ENCODE measurements at regions of chr17 and their contacts with region 1.

Region 1: DNA sequence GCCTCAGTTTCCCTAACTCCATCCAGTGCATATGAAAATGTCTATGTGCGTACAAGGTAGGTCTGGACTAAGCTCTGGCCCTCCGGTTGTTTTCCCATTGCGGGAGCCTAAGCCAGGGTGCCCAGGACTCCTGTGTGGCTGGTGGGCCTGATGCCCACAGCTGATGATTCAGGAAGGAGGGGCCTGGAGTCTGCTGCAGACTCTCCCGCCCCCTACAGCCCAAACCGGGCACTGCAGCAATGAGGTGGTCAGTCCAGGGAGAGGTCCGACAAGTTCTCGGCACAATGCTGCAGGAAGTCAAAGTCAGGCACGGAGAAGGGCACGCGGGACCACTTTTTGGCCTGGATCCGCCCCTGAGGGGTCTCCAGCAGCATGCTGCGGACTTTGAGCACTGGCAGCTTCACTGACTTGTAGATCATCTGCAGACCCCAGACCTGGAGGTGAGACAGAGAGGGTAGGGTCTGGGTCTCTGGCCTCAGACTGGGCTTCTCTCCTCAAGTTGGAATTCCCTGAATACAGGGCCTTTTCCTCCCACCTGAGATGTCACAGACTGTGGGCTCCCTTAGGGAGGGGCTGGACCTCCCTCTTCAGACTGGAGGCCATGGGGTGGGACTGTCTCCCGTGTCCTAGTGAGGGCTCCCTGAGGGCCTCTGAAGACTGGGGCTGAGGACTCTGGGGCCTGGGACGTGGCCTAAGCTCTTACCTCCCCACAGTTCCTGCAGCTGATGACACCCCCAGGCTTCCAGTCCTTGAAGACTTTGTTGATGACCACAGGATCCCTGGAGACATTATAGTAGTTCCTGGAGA is 3.4 kb upstream of the ZNF385C start:
- DNase-seq: peak; percentile 94
- H3K4me3 Mint-ChIP-seq: no peak overlapping the region
- H3K27ac Mint-ChIP-seq: no peak overlapping the region
- H3K4me1 Mint-ChIP-seq: peaks cover 7% of the 10 kb centered on the region
- H3K27me3 Mint-ChIP-seq: peaks cover 28% of the 10 kb centered on the region
- CTCF ChIP-seq: peak; percentile 98

Region 2: DNA sequence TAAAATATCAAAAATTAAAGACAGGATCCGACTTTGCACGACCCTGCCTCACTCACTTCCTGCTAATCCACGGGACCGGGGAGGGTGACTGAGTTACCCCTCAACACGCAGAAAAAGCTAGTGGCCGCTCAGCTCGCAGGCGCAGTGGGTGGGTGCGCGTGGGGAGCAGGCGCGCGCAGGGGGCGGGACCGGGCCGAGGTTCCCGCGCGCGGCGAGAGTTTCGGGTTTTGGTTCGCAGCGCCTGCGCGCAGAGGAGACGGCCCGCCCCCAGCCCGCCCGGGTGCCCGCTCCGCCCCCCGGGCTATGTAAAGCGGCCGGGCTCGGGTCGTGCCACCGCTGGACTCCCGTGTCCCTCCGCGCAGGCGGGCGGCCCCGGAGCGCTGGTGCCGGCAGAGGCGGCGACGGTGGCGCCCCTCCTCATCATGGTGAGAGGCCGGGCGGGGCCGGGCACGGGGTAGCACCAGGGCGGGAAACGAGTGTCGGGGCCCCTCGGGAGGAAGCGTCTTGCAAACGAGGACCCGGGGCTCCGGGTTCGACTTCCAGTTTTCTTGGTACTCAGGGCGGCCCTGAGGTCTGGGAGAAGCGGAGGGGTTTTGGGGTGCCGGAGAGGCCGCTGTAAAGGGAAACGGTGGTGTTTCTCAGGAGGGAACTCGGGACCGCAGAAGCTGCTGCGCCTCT is 135.1 kb before region 1 on chr17 and contains the start of gene CNP:
- CTCF ChIA-PET with region 1: interaction called, 4 read pairs
- intact Hi-C with region 1: loop called (anchors 5 kb)
- DNase-seq: peak; percentile 98
- H3K4me3 Mint-ChIP-seq: peak within 1 kb of the TSS; percentile 58
- H3K27ac Mint-ChIP-seq: peak within 1 kb of the TSS; percentile 48
- H3K4me1 Mint-ChIP-seq: peaks cover 16% of the 10 kb centered on the region
- H3K27me3 Mint-ChIP-seq: peaks cover 11% of the 10 kb centered on the region
- CTCF ChIP-seq: no peak
- total RNA-seq, gene CNP: 144 and 156 TPM in 2 replicates

Region 3: DNA sequence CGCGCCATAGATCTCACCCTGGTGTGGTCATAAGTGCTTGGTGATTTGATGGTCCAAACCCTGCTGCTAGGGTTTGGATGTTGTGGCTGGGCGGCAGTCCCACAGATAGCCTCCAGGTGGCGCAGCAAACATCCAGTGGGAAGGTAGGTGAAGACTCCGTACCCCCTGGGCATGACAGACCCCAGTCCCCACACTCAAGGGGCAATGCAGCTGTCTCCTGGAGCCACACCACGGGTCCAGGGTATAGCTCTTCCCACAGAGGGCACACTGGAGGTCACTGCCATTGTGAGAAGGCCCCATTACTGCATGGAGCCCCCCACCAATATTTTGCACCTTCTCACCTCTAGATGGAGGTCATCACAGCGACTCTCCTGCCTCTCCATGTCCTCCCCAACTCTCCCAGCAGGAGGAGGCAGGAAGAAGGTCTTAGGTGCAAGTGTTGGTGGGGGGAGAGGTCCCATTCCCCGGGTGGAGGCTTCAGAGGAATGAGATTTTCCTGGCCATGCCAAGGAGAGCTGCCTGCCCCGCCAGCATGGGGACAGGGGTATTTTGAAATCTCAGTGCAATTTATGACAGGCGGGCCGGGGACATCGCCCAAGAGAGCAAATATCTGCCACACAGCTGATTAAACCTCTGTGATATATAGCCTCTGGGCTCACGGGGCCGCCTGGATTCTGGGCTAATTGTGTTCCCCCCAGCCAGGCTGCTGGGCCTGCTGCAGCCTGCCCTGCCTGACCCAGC is 34.2 kb before region 1 on chr17:
- CTCF ChIA-PET with region 1: interaction called, 10 read pairs
- intact Hi-C with region 1: loop called (anchors 1 kb)
- DNase-seq: peak; percentile 85
- H3K4me3 Mint-ChIP-seq: no peak overlapping the region
- H3K27ac Mint-ChIP-seq: no peak overlapping the region
- H3K4me1 Mint-ChIP-seq: no peaks in the 10 kb centered on the region
- H3K27me3 Mint-ChIP-seq: peaks cover 67% of the 10 kb centered on the region
- CTCF ChIP-seq: peak; percentile 99

Region 4: DNA sequence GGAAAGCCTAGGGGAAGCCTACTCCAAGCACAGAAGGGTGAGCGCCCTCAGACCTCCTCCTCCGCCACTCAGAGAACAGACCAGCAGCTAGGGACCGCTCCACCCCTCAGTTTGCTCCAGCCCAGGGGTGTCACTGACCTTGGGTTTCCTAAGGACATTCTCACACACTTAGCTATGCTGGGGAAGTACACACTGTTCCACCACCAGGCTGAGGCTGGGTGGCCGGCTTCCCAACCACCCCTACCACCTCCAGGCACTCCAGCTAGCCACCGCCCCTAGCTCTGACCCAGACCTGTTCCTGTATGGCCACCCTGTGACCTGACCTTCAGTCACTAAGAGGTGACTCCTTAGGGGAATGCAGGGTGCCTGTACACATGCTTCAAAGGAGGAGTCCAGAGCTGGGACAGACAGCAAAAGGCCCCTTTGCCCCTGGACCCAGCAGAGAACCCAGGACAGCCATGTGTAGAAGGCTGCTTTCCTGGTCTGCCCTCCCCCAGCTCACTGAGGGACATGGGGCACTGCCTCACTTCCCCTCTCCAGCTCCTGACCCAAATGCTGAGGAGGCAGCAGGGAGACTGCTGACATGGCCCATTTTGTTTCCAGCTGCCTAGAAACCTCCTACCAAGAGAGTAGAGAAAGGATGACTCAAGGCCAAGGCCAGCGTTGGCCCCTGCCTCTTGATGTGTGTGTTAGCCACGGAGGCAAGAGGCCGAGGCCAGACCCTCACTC is 27.6 kb after region 1 on chr17:
- CTCF ChIA-PET with region 1: no interaction called
- intact Hi-C with region 1: no loop called
- DNase-seq: no peak
- H3K4me3 Mint-ChIP-seq: no peak overlapping the region
- H3K27ac Mint-ChIP-seq: no peak overlapping the region
- H3K4me1 Mint-ChIP-seq: peaks cover 35% of the 10 kb centered on the region
- H3K27me3 Mint-ChIP-seq: no peaks in the 10 kb centered on the region
- CTCF ChIP-seq: no peak